ENCODE measurements at regions of chr10 and their contacts with region 1.

Region 1: DNA sequence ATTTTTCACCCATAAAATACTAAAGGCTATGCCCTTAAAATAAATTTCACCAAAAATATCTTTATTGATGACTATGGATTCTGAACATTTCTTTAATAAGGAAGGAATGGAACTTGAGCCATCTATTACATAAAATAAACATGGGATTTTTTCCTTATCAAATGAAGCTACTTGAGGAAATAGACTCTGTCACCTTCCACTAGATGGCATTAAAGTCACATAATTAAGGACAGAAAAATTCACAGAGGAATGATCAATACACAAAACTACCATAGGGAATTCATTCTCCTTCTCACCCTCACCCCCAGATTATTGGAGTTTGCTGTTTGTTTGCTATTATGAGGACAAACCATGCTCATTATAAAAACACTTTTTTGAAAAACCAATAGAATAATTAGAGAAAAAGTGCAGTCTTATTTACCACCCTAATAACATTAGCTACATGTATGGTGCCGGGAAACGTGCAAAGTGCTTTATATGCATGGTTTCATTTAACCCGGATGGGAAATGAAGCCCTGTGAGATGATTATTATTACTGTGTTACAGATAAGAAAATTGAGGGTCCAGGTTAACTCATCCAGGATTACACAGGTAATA is 21.1 kb upstream of the FOXI2 start:
- DNase-seq: peak in 1 of 2 experiments; percentile 28
- ATAC-seq: peak in 1 of 2 experiments; percentile 45; a peak in 1 of 6 replicates
- H3K4me3 ChIP-seq: no peak overlapping the region
- H3K27ac ChIP-seq: no peak overlapping the region
- H3K4me1 ChIP-seq: no peaks in the 10 kb centered on the region
- CTCF ChIP-seq: peak; percentile 62
- EP300 ChIP-seq: no peak
- POLR2A ChIP-seq: no peak
- RAD21 ChIP-seq: peak; percentile 62 to 69

Region 2: GRCh38 chr10:127690176-127690835 is 25.6 kb before region 1 on chr10:
- CTCF ChIA-PET with region 1: no interaction called
- POLR2A ChIA-PET with region 1: no interaction called
- DNase-seq: no peak
- ATAC-seq: no peak
- H3K4me3 ChIP-seq: no peak overlapping the region
- H3K27ac ChIP-seq: no peak overlapping the region
- H3K4me1 ChIP-seq: no peaks in the 10 kb centered on the region
- CTCF ChIP-seq: no peak
- EP300 ChIP-seq: no peak
- POLR2A ChIP-seq: no peak
- RAD21 ChIP-seq: no peak

Region 3: GRCh38 chr10:127702271-127702670 is 13.6 kb before region 1 on chr10:
- CTCF ChIA-PET with region 1: interaction called, 10 read pairs
- POLR2A ChIA-PET with region 1: no interaction called
- DNase-seq: no peak
- ATAC-seq: no peak
- H3K4me3 ChIP-seq: no peak overlapping the region
- H3K27ac ChIP-seq: no peak overlapping the region
- H3K4me1 ChIP-seq: no peaks in the 10 kb centered on the region
- CTCF ChIP-seq: no peak
- EP300 ChIP-seq: no peak
- POLR2A ChIP-seq: no peak
- RAD21 ChIP-seq: no peak